MCF 10A (cell line): ENCODE measurements at regions of chr9 and their contacts with region 1.

Region 1: DNA sequence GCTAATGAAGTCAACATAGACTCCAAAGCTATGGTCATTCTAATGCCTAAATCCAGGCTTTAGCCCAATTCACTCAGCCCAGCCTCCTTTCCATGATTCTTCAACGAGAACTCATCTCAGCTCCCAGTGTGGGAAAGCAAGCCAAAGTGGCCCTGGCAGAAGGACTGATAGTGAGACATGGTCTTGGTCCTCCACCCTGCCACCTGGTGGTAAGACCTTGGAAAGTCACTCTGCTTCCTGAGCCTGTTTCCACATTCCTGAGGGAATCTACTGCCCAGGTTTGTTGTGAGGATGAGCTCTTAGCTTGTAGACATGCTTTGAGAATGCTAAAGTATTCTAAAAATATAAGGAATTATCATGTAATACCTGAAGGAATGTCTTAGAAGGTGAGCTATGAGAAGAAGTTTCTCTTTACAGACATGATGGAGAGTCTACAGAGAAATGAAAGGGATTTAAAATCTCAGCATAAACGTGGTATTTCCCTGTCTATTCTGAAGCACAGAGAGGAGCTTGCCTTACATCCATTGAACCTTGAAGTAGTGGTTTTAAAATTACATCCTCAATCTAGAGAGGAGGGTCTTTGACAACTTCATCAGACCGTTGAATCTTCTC is 173.5 kb downstream of the TRIM32 start:
- DNase-seq: peak; percentile 86
- H3K4me3 Mint-ChIP-seq: no peak overlapping the region
- H3K27ac Mint-ChIP-seq: peak overlapping the region; percentile 85
- H3K4me1 Mint-ChIP-seq: peaks cover 26% of the 10 kb centered on the region
- H3K27me3 Mint-ChIP-seq: no peaks in the 10 kb centered on the region
- CTCF ChIP-seq: peak; percentile 80

Region 2: GRCh38 chr9:115640887-115641286 is 1219.7 kb before region 1 on chr9:
- CTCF ChIA-PET with region 1: no interaction called
- POLR2A ChIA-PET with region 1: no interaction called
- intact Hi-C with region 1: no loop called
- DNase-seq: peak; percentile 42
- H3K4me3 Mint-ChIP-seq: no peak overlapping the region
- H3K27ac Mint-ChIP-seq: peak overlapping the region; percentile 56
- H3K4me1 Mint-ChIP-seq: peaks cover 36% of the 10 kb centered on the region
- H3K27me3 Mint-ChIP-seq: no peaks in the 10 kb centered on the region
- CTCF ChIP-seq: no peak

Region 3: DNA sequence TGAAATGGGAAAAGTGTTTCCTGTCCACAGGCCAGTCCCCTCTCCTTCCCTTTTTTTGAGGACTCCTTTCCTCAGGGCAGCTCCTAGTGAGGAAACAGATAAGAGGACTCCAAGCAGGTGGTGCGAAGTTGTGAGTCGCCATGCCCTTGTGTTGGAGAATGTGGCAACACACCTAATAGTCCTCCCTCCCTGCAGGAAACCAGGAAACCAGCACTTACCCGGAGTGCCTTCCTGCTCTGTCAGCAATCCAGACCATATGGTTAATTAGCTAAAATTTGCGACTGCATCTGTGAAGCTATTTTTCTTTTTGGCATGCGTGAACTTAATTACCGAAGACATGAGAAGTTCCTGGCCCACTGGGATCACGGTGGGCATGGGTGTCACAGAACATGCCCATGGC is 103.6 kb before region 1 on chr9:
- CTCF ChIA-PET with region 1: interaction called, 11 read pairs
- POLR2A ChIA-PET with region 1: no interaction called
- intact Hi-C with region 1: no loop called
- DNase-seq: peak; percentile 7
- H3K4me3 Mint-ChIP-seq: no peak overlapping the region
- H3K27ac Mint-ChIP-seq: no peak overlapping the region
- H3K4me1 Mint-ChIP-seq: peaks cover 9% of the 10 kb centered on the region
- H3K27me3 Mint-ChIP-seq: no peaks in the 10 kb centered on the region
- CTCF ChIP-seq: no peak

Region 4: GRCh38 chr9:116806075-116806474 is 54.5 kb before region 1 on chr9:
- CTCF ChIA-PET with region 1: interaction called, 5 read pairs
- POLR2A ChIA-PET with region 1: no interaction called
- intact Hi-C with region 1: loop called (anchors 2 kb)
- DNase-seq: peak; percentile 63
- H3K4me3 Mint-ChIP-seq: no peak overlapping the region
- H3K27ac Mint-ChIP-seq: no peak overlapping the region
- H3K4me1 Mint-ChIP-seq: peaks cover under 1% of the 10 kb centered on the region
- H3K27me3 Mint-ChIP-seq: no peaks in the 10 kb centered on the region
- CTCF ChIP-seq: no peak

Region 5: GRCh38 chr9:116842658-116843057 is 18.0 kb before region 1 on chr9:
- CTCF ChIA-PET with region 1: interaction called, 60 read pairs
- POLR2A ChIA-PET with region 1: interaction called, 63 read pairs
- intact Hi-C with region 1: loop called (anchors 1 kb)
- DNase-seq: peak; percentile 40
- H3K4me3 Mint-ChIP-seq: no peak overlapping the region
- H3K27ac Mint-ChIP-seq: no peak overlapping the region
- H3K4me1 Mint-ChIP-seq: peaks cover 21% of the 10 kb centered on the region
- H3K27me3 Mint-ChIP-seq: no peaks in the 10 kb centered on the region
- CTCF ChIP-seq: no peak